Sigmoid colon (tissue), 7 donors: ENCODE measurements at regions of chr3 and their contacts with region 1.

Region 1: GRCh38 chr3:152444029-152444641 is 175.4 kb downstream of the MBNL1 start:
- DNase-seq: no peak
- H3K4me3 ChIP-seq: peak overlapping the region in 1 of 4 donors; percentile 5
- H3K27ac ChIP-seq: peak overlapping the region; percentile 23 to 68 (median 40)
- H3K4me1 ChIP-seq: peaks cover 0 to 81% (median 65%) of the 10 kb centered on the region in 4 donors
- H3K27me3 ChIP-seq: no peaks in the 10 kb centered on the region
- CTCF ChIP-seq: peak; percentile 51 to 67 (median 61)
- EP300 ChIP-seq: no peak
- POLR2A ChIP-seq: no peak

Region 2: GRCh38 chr3:152026033-152026556 is 418.0 kb before region 1 on chr3:
- intact Hi-C with region 1: loop called (anchors 5 kb)
- DNase-seq: no peak
- H3K4me3 ChIP-seq: no peak overlapping the region
- H3K27ac ChIP-seq: peak overlapping the region in 1 of 4 donors; percentile 44
- H3K4me1 ChIP-seq: peaks cover 0 to 12% (median 9%) of the 10 kb centered on the region in 4 donors
- H3K27me3 ChIP-seq: no peaks in the 10 kb centered on the region
- CTCF ChIP-seq: peak in 1 of 4 experiments; percentile 34
- EP300 ChIP-seq: no peak
- POLR2A ChIP-seq: no peak

Region 3: DNA sequence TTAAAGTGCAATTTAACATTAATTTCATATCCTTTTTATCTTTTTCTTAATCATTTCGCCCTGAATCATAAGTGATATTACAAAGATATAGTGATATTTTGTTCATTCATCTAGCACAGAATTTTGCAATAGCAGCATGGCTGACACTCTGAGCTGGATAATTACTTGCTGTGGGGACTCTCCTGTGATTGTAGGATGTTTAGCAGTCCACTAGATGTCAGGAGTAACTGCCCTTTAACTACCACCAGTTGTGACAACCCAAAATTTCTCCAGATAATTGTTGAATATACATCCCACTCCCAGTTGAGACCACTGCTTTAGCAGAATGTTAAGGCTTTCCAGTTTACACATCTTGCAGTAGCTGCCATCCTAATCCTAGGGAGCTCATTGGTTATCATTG is 372.2 kb before region 1 on chr3:
- intact Hi-C with region 1: loop called (anchors 5 kb)
- DNase-seq: no peak
- H3K4me3 ChIP-seq: no peak overlapping the region
- H3K27ac ChIP-seq: no peak overlapping the region
- H3K4me1 ChIP-seq: peaks cover 0 to 20% (median 5%) of the 10 kb centered on the region in 4 donors
- H3K27me3 ChIP-seq: no peaks in the 10 kb centered on the region
- CTCF ChIP-seq: peak in 1 of 4 experiments; percentile 27
- EP300 ChIP-seq: no peak
- POLR2A ChIP-seq: no peak

Region 4: DNA sequence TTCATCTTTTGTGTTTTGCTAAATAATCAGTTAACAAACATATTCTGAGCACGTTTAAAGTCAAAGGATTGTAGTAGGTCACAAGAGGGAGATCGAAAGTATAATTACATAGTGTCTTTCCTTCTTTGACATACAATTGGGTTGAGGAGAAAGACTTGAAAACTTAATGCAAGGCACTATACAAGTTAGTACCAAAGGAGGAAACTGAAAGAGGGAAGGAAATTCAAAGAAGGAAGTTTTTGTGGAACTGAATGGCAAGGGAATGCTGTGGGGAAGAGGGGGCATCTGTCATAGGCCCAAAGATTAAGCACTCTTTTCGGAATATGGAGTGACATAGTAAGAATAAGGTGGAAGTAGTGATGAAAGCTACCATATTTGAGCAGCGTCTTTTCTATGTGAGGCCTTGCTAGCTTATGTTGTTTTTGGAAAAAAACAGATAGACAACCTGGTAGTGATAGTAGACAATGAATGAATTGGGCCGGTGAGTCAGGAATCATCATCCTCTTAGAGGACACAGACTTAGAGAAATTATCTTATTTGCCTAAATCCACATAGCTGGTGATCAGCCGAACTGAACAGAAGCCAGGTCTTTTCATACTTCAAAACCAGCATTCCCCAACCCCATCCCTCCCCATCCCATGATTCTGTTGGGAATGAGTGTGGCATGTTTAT is 165.2 kb before region 1 on chr3:
- intact Hi-C with region 1: no loop called
- DNase-seq: no peak
- H3K4me3 ChIP-seq: no peak overlapping the region
- H3K27ac ChIP-seq: peak overlapping the region; percentile 98 to 99 (median 99)
- H3K4me1 ChIP-seq: peaks cover 0 to 100% (median 93%) of the 10 kb centered on the region in 4 donors
- H3K27me3 ChIP-seq: no peaks in the 10 kb centered on the region
- CTCF ChIP-seq: no peak
- EP300 ChIP-seq: no peak
- POLR2A ChIP-seq: no peak

Region 5: DNA sequence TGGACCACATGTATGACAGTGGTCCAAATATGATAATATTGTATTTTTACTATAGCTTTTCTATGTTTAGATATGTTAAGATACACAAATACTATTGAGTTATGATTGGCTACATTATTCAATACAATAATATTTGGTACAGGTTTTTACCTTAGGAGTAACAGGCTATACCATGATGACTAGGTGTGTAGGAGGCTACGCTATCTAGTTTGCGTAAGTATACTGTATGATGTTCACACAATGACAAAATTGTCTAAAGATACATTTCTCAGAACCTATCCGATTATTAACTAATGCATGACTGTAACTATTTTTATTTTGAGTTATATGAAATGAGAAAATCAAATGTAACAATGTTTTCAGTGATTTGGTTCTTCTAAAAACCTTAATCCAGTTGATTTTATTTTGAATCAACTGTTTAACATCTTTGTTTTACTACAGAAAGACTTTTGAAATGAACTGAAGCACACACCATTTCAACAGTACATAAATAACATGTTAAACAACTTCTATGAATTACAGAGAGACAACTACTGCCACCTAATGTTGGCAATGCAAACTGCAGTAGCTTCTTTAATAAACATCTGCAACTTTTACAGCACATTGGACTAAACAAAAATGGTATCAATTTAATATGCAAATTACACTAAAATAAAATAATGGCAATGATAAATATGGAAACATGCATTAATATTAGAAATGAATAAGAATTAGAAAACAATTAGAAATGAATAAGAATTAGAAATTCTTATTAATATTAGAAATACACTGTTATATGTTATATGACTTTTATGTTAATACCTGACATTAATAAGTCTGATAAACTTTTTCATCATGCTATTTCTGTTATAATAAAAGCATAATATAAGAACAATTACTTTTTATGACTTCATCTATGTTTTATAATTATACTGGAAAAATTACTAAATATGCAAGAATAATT is 80.3 kb after region 1 on chr3:
- intact Hi-C with region 1: no loop called
- DNase-seq: no peak
- H3K4me3 ChIP-seq: no peak overlapping the region
- H3K27ac ChIP-seq: no peak overlapping the region
- H3K4me1 ChIP-seq: peaks cover 0 to 8% (median 0%) of the 10 kb centered on the region in 4 donors
- H3K27me3 ChIP-seq: no peaks in the 10 kb centered on the region
- CTCF ChIP-seq: peak; percentile 65 to 90 (median 82)
- EP300 ChIP-seq: no peak
- POLR2A ChIP-seq: no peak